IMR-90 (cell line): ENCODE measurements at regions of chr2 and their contacts with region 1.

Region 1: GRCh38 chr2:144078106-144078505 is 441.8 kb downstream of the ZEB2 start:
- DNase-seq: peak; percentile 37
- ATAC-seq: peak; percentile 25; the same call in 1 of the 2 replicates
- H3K4me3 ChIP-seq: no peak overlapping the region
- H3K27ac ChIP-seq: no peak overlapping the region
- H3K4me1 ChIP-seq: peaks cover 11% of the 10 kb centered on the region; the same call in 1 of the 2 replicates
- H3K27me3 ChIP-seq: no peaks in the 10 kb centered on the region
- CTCF ChIP-seq: no peak
- POLR2A ChIP-seq: no peak
- RAD21 ChIP-seq: no peak

Region 2: DNA sequence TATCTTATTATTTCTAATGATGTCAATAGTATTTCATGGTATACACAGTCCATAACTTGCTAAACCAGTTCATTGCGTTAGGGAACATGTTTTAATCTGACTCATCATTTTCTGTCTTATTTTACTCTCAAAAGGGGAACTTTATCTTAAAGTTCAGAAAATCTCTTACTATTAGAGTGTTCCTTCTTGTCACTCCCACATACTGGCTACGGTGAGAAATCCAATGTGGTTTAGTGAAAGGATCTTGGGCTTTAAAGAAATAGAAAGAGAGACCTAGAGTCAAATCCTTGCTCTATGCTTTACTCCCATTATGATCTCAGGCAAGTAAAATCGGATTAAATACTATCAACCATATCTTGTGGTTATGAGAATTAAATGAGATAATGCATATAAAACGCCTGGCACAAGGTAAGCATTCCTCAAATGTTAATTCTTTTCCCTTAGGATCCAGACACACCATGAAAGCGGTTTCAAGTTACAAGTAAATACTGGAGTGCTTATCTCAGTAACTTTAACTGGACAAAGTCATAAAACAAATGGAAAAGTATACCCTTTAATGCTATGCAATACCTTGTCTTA is 372.9 kb before region 1 on chr2:
- CTCF ChIA-PET with region 1: no interaction called
- POLR2A ChIA-PET with region 1: no interaction called
- dilution Hi-C with region 1: no loop called
- in situ Hi-C with region 1: no loop called
- intact Hi-C with region 1: loop called (anchors 10 kb)
- DNase-seq: peak; percentile 76
- ATAC-seq: peak; percentile 48
- H3K4me3 ChIP-seq: no peak overlapping the region
- H3K27ac ChIP-seq: peak overlapping the region; percentile 66; the same call in 1 of the 2 replicates
- H3K4me1 ChIP-seq: peaks cover 8% of the 10 kb centered on the region
- H3K27me3 ChIP-seq: no peaks in the 10 kb centered on the region
- CTCF ChIP-seq: no peak
- POLR2A ChIP-seq: no peak
- RAD21 ChIP-seq: no peak

Region 3: GRCh38 chr2:143885461-143885860 is 192.6 kb before region 1 on chr2:
- CTCF ChIA-PET with region 1: no interaction called
- POLR2A ChIA-PET with region 1: no interaction called
- dilution Hi-C with region 1: no loop called
- in situ Hi-C with region 1: no loop called
- intact Hi-C with region 1: no loop called
- DNase-seq: peak; percentile 3
- ATAC-seq: no peak
- H3K4me3 ChIP-seq: no peak overlapping the region
- H3K27ac ChIP-seq: no peak overlapping the region
- H3K4me1 ChIP-seq: no peaks in the 10 kb centered on the region
- H3K27me3 ChIP-seq: no peaks in the 10 kb centered on the region
- CTCF ChIP-seq: no peak
- POLR2A ChIP-seq: no peak
- RAD21 ChIP-seq: no peak